T-cell (primary cell): ENCODE measurements at regions of chr2 and their contacts with region 1.

Region 1: GRCh38 chr2:176753752-176754474 is 458.7 kb upstream of the HNRNPA3 start:
- DNase-seq: no peak
- ATAC-seq: no peak
- H3K4me3 ChIP-seq: no peak overlapping the region
- H3K4me3 Mint-ChIP-seq: no peak overlapping the region
- H3K27ac ChIP-seq: no peak overlapping the region
- H3K27ac Mint-ChIP-seq: no peak overlapping the region
- H3K4me1 ChIP-seq: no peaks in the 10 kb centered on the region
- H3K4me1 Mint-ChIP-seq: no peaks in the 10 kb centered on the region
- H3K27me3 ChIP-seq: no peaks in the 10 kb centered on the region
- H3K27me3 Mint-ChIP-seq: peaks cover 12 to 13% of the 10 kb centered on the region in 2 donors

Region 2: DNA sequence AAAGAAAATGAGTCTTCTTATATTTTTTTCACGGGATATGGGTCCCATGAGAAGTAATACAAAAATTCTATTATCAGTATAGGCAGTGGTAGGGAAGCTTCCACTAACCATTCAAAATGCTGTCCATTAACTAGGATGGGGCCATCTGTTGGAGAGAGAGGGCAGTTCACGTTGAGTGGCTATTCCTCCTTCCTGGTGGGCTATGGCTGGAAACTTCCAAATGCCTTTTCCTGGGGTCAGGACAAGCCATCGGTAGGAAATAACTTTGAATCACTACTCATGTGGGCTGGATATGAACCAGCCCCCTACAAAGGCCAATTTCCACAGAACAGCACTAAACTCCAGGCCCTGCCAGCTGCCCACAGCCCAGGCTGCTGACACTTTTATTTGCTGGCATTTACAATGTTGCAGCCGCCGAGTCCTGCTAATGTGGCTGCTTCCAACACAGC is 302.6 kb after region 1 on chr2:
- CTCF ChIA-PET with region 1: no interaction called
- POLR2A ChIA-PET with region 1: interaction called in 1 of 2 experiments, 10 read pairs
- DNase-seq: no peak
- ATAC-seq: no peak
- H3K4me3 ChIP-seq: no peak overlapping the region
- H3K4me3 Mint-ChIP-seq: no peak overlapping the region
- H3K27ac ChIP-seq: no peak overlapping the region
- H3K27ac Mint-ChIP-seq: no peak overlapping the region
- H3K4me1 ChIP-seq: no peaks in the 10 kb centered on the region
- H3K4me1 Mint-ChIP-seq: no peaks in the 10 kb centered on the region
- H3K27me3 ChIP-seq: no peaks in the 10 kb centered on the region
- H3K27me3 Mint-ChIP-seq: no peaks in the 10 kb centered on the region